Activated naive CD4-positive, alpha-beta T cell treated with anti-CD3 and anti-CD28 coated beads for 36 hours (primary cell): ENCODE measurements at regions of chrX and their contacts with region 1.

Region 1: GRCh38 chrX:123833387-123833786 is 26.5 kb upstream of the XIAP start:
- DNase-seq: peak; percentile 71
- H3K4me3 Mint-ChIP-seq: no peak overlapping the region
- H3K27ac Mint-ChIP-seq: no peak overlapping the region
- H3K4me1 Mint-ChIP-seq: peaks cover 8% of the 10 kb centered on the region
- H3K27me3 Mint-ChIP-seq: peaks cover 7% of the 10 kb centered on the region

Region 2: DNA sequence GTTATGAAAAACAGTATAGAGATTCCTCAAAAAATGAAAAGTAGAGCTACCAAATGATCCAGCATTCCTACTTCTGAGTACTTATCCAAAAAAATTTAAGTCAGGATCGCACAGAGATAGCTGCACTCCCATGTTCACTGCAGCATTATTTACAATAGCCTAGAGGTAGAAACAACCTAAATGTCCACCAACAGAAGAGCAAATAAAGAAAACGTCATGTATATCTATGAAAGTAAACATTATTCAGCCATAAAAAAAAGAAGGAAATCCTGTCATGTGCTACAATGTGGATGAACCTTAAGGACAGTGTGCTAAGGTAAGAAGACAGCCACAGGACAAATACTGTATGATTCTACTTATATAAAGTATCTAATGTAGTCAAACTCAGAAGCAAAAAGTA is 112.9 kb before region 1 on chrX:
- CTCF ChIA-PET with region 1: no interaction called
- intact Hi-C with region 1: no loop called
- DNase-seq: no peak
- H3K4me3 Mint-ChIP-seq: no peak overlapping the region
- H3K27ac Mint-ChIP-seq: no peak overlapping the region
- H3K4me1 Mint-ChIP-seq: peaks cover 22% of the 10 kb centered on the region
- H3K27me3 Mint-ChIP-seq: no peaks in the 10 kb centered on the region

Region 3: DNA sequence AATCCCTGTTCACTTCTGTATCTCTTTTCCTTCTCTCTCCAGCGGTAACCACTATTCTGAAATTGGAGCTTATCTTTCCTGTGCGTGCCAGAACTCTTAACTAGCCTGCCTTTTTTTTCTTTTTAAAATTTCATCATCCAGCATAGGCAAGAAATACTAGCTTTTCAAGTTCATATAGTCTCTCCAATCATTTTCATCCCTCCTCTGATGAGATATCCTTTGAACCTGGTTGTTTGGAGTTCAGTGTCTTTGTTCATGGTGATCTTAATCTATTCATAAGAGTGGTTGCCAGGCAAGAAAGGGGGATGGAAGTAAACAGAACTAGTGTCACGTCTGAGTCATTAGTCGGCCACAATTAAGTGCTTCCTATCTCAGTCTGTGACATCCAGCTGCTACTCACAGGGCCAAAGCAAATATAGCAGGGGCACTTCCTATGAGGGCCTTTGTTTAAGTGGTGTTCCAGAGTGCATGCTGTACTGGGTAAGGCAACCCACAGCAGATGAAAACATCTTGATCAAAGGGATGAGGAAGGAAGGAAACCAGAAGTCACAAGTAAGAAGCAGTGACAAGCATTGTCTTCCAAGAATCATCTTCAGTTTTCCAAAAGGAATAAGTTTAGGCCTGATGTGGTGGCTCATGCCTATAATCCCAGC is 29.9 kb before region 1 on chrX:
- CTCF ChIA-PET with region 1: interaction called, 4 read pairs
- intact Hi-C with region 1: loop called (anchors 2 kb)
- DNase-seq: peak; percentile 35
- H3K4me3 Mint-ChIP-seq: no peak overlapping the region
- H3K27ac Mint-ChIP-seq: peak overlapping the region; percentile 39
- H3K4me1 Mint-ChIP-seq: peaks cover 8% of the 10 kb centered on the region
- H3K27me3 Mint-ChIP-seq: no peaks in the 10 kb centered on the region

Region 4: GRCh38 chrX:123859846-123860838 is 26.8 kb after region 1 on chrX and contains the start of gene XIAP:
- CTCF ChIA-PET with region 1: interaction called, 4 read pairs
- intact Hi-C with region 1: loop called (anchors 1 kb)
- DNase-seq: peak; percentile 70
- H3K4me3 Mint-ChIP-seq: peak within 1 kb of the TSS; percentile 79
- H3K27ac Mint-ChIP-seq: peak within 1 kb of the TSS; percentile 92
- H3K4me1 Mint-ChIP-seq: peaks cover 11% of the 10 kb centered on the region
- H3K27me3 Mint-ChIP-seq: peaks cover 2% of the 10 kb centered on the region
- total RNA-seq, gene XIAP: 24.0 to 24.5 TPM

Region 5: GRCh38 chrX:123884809-123885408 is 51.5 kb after region 1 on chrX:
- CTCF ChIA-PET with region 1: interaction called, 7 read pairs
- intact Hi-C with region 1: loop called (anchors 2 kb)
- DNase-seq: peak; percentile 42
- H3K4me3 Mint-ChIP-seq: no peak overlapping the region
- H3K27ac Mint-ChIP-seq: no peak overlapping the region
- H3K4me1 Mint-ChIP-seq: peaks cover 8% of the 10 kb centered on the region
- H3K27me3 Mint-ChIP-seq: no peaks in the 10 kb centered on the region

Region 6: GRCh38 chrX:123993326-123993725 is 159.9 kb after region 1 on chrX:
- CTCF ChIA-PET with region 1: no interaction called
- intact Hi-C with region 1: no loop called
- DNase-seq: no peak
- H3K4me3 Mint-ChIP-seq: no peak overlapping the region
- H3K27ac Mint-ChIP-seq: no peak overlapping the region
- H3K4me1 Mint-ChIP-seq: peaks cover 50% of the 10 kb centered on the region
- H3K27me3 Mint-ChIP-seq: no peaks in the 10 kb centered on the region

Region 7: DNA sequence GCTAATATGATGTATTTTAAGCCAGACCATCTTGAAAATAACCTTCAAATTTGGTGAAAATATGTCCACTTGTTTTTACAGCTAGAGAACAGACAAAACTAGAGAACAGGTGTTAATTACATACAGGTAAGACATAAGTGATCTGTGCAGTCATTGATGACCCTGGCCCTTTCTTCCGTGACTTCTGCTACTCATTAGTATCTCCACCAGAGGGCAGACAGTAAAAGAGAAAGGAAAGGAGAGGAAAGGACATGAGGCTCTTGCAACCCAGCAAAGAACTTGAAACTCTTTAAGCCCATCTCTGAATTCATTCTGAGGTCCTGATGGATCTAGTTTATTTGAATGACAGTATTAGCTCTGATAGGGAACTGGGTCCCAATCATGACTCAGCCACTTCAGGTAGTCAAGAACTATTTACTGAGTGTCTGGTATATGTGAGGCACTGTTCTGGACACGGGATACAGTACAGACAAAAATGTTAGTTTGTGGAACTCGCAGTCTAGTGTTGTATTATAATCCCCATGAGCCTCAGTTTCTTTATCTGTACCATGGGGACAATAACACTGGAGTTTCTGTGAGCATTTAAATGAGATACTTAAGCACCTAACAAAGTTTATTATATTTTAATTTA is 378.0 kb after region 1 on chrX:
- CTCF ChIA-PET with region 1: no interaction called
- intact Hi-C with region 1: loop called (anchors 2 kb)
- DNase-seq: peak; percentile 27
- H3K4me3 Mint-ChIP-seq: no peak overlapping the region
- H3K27ac Mint-ChIP-seq: no peak overlapping the region
- H3K4me1 Mint-ChIP-seq: peaks cover 38% of the 10 kb centered on the region
- H3K27me3 Mint-ChIP-seq: no peaks in the 10 kb centered on the region